ENCODE measurements at regions of chr15 and their contacts with region 1.

Region 1: GRCh38 chr15:75307778-75308391 is 25.2 kb downstream of the GOLGA6D start:
- DNase-seq: peak; percentile 69
- H3K4me3 ChIP-seq: no peak overlapping the region
- H3K27ac ChIP-seq: no peak overlapping the region
- H3K4me1 ChIP-seq: no peaks in the 10 kb centered on the region
- H3K27me3 ChIP-seq: no peaks in the 10 kb centered on the region
- CTCF ChIP-seq: peak; percentile 66

Region 2: GRCh38 chr15:75029378-75030022 is 278.4 kb before region 1 on chr15:
- CTCF ChIA-PET with region 1: no interaction called
- POLR2A ChIA-PET with region 1: no interaction called
- intact Hi-C with region 1: loop called (anchors 1 kb)
- DNase-seq: peak; percentile 97
- H3K4me3 ChIP-seq: peak overlapping the region; percentile 21
- H3K27ac ChIP-seq: peak overlapping the region; percentile 66
- H3K4me1 ChIP-seq: peaks cover 54% of the 10 kb centered on the region
- H3K27me3 ChIP-seq: no peaks in the 10 kb centered on the region
- CTCF ChIP-seq: peak; percentile 92

Region 3: GRCh38 chr15:75090388-75090734 is 217.5 kb before region 1 on chr15:
- CTCF ChIA-PET with region 1: no interaction called
- POLR2A ChIA-PET with region 1: no interaction called
- intact Hi-C with region 1: no loop called
- DNase-seq: no peak
- H3K4me3 ChIP-seq: no peak overlapping the region
- H3K27ac ChIP-seq: no peak overlapping the region
- H3K4me1 ChIP-seq: no peaks in the 10 kb centered on the region
- H3K27me3 ChIP-seq: no peaks in the 10 kb centered on the region
- CTCF ChIP-seq: no peak